Lower leg skin (tissue), 4 donors: ENCODE measurements at regions of chr13 and their contacts with region 1.

Region 1: GRCh38 chr13:51797664-51798488 is 6.1 kb downstream of the DHRS12 start:
- DNase-seq: no peak
- H3K4me3 ChIP-seq: no peak overlapping the region
- CTCF ChIP-seq: no peak
- POLR2A ChIP-seq: no peak

Region 2: GRCh38 chr13:50543782-50544181 is 1254.1 kb before region 1 on chr13:
- intact Hi-C with region 1: no loop called
- DNase-seq: no peak
- H3K4me3 ChIP-seq: no peak overlapping the region
- CTCF ChIP-seq: no peak
- POLR2A ChIP-seq: no peak

Region 3: DNA sequence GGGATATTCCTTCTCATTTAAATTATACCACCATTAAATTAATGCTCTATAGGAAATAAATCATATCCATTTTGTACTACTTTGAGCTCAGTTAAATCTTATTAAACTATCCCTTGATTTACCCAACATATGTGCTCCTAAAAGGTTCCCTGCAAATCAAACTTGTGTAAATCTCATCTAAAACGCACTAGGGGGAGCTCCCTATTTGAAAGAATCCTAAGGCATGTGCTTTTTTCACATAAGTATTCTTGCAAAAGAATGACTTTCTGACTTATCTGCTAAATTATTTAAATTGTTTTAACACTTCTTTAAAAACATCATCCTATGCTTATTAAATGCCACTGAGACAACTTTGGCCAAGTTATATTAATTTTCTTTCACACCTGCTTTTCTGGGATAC is 353.0 kb before region 1 on chr13:
- intact Hi-C with region 1: loop called (anchors 5 kb)
- DNase-seq: no peak
- H3K4me3 ChIP-seq: no peak overlapping the region
- CTCF ChIP-seq: no peak
- POLR2A ChIP-seq: no peak

Region 4: GRCh38 chr13:51645154-51645650 is 152.7 kb before region 1 on chr13:
- intact Hi-C with region 1: no loop called
- DNase-seq: no peak
- H3K4me3 ChIP-seq: no peak overlapping the region
- CTCF ChIP-seq: no peak
- POLR2A ChIP-seq: no peak

Region 5: DNA sequence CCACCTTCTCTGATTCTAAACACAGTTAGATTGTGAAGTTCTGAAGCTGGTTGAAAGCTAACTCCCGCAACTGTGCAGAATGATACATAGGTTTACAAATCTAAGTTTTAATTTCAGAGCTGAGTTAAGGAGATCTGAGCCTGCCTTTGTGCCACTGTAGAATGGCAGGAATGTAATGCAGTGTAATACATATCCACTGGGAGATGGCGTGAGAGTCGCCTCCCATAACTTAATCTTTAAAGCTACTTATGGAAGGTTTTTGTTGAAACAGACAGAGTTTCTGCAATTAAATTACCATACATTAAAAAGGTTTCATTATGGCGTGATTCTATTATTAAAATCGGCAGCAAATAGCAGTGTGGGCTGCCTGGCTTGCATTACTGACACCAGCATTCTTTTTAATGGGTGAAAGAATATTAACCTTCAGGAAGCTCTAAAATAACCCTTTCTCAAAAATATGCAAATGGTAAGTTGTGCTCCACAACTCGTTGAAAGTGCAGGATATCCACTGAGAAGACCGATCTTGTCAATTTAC is 1488.1 kb after region 1 on chr13:
- intact Hi-C with region 1: no loop called
- DNase-seq: no peak
- H3K4me3 ChIP-seq: no peak overlapping the region
- CTCF ChIP-seq: no peak
- POLR2A ChIP-seq: no peak